Esophagus muscularis mucosa (tissue), 4 donors: ENCODE measurements at regions of chr3 and their contacts with region 1.

Region 1: GRCh38 chr3:32018757-32019564 is 37.4 kb downstream of the ZNF860 start:
- DNase-seq: no peak
- H3K4me3 ChIP-seq: no peak overlapping the region
- H3K27ac ChIP-seq: no peak overlapping the region
- H3K4me1 ChIP-seq: peaks cover 0 to 20% (median 15%) of the 10 kb centered on the region in 4 donors
- H3K27me3 ChIP-seq: no peaks in the 10 kb centered on the region
- CTCF ChIP-seq: peak; percentile 76 to 82 (median 77)
- EP300 ChIP-seq: no peak
- POLR2A ChIP-seq: no peak

Region 2: DNA sequence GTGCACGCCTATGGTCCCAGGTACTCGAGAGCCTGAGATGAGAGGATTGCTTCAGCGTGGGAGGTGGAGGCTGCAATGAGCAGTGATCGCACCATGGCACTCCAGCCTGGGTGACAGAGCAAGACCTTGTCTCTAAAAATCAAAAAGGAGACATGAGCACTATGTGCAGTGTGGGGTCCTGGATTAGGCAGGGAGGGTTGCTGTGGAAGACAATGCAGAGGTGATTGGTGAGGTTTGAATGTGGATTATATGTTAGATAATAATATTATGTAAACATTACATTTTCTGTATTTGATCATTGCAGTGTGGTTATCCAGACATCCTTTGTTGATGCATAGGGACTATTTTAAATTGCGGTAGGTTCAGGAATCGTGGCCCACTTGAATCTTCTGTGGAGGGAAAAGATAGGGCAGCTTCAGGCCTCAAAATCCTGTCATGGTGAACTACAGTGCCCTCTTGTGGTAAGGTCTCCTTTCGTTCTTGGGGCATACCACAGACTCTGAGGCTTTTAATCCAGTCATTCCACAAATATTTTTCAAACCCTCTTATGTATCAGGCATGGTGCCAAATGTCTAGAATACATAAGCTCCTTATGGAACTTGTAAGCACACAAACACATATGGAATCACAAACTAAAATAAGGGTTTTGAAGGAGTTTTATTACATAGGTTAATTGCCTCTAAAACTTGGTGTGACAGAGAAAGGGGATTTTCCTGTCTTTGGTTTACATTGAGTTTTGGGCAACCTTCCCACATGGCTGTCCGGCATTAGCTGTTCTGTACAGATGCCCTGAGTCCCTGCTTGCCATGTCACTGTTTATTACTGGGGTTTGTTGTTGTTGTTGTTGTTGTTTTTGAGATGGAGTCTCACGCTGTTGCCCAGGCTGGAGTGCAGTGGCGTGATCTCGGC is 125.1 kb after region 1 on chr3:
- intact Hi-C with region 1: loop called (anchors 1 kb)
- DNase-seq: no peak
- H3K4me3 ChIP-seq: no peak overlapping the region
- H3K27ac ChIP-seq: no peak overlapping the region
- H3K4me1 ChIP-seq: peaks cover 0 to 13% (median 7%) of the 10 kb centered on the region in 4 donors
- H3K27me3 ChIP-seq: no peaks in the 10 kb centered on the region
- CTCF ChIP-seq: peak; percentile 75 to 85 (median 80)
- EP300 ChIP-seq: no peak
- POLR2A ChIP-seq: no peak